HEK293T (cell line): ENCODE measurements at regions of chr9 and their contacts with region 1.

Region 1: GRCh38 chr9:21812946-21813568 is 10.6 kb downstream of the MTAP start:
- DNase-seq: peak; percentile 80

Region 2: DNA sequence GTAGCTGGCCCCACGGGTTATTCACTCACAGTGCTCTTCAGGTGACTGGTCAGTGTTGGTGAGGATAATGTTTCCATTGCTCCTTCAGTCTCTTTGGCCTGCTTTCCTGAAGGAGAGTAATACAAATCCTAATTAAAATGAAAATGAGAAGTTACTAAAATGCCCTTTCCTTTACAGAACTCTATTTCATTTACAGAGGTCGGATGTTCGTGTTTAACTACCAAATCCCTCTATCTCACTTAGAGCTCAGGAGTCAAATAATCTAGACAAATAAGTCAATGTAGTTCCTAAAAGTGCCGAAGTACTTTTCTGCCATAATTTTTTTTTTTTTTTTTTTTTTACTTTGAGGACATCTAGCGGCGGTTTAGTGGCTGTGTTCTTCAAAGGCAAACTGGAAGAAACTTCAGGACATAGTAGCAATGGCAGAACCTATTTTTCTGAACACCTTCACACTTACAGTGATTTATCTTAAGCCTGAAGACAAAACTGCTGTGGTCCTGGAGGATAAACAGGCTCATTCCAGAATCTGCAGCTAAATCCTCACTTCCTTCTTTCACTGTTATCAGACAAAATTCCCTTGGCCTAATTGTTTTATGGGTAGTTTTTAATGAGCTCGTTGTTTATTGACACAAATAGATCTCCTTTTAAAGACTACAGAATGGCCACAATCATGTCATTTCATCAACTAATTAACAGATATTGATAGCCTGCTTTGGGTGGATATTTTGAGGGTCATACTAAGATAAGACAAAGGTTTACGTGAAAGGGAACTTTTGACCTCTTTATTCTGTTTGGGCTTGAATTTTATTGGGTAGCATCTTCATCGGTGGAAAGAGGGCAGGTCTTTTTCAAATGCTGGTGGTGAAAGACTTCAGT is 426.0 kb after region 1 on chr9:
- CTCF ChIA-PET with region 1: interaction called, 15 read pairs
- POLR2A ChIA-PET with region 1: interaction called, 4 read pairs
- DNase-seq: peak; percentile 59

Region 3: GRCh38 chr9:22244141-22245011 is 431.3 kb after region 1 on chr9:
- CTCF ChIA-PET with region 1: interaction called, 15 read pairs
- POLR2A ChIA-PET with region 1: interaction called, 4 read pairs
- DNase-seq: peak; percentile 55